ENCODE measurements at regions of chr11 and their contacts with region 1.

Region 1: GRCh38 chr11:1521382-1522080 is 35.0 kb upstream of the MOB2 start:
- DNase-seq: no peak
- H3K4me3 ChIP-seq: no peak overlapping the region
- H3K27ac ChIP-seq: no peak overlapping the region
- H3K4me1 ChIP-seq: peaks cover 10% of the 10 kb centered on the region
- H3K27me3 ChIP-seq: no peaks in the 10 kb centered on the region
- CTCF ChIP-seq: no peak
- EP300 ChIP-seq: no peak
- POLR2A ChIP-seq: no peak

Region 2: GRCh38 chr11:1202776-1203504 is 318.6 kb before region 1 on chr11:
- intact Hi-C with region 1: loop called (anchors 2 to 5 kb)
- DNase-seq: peak in 4 of 5 donors; percentile 53 to 75 (median 68)
- H3K4me3 ChIP-seq: no peak overlapping the region
- H3K27ac ChIP-seq: no peak overlapping the region
- H3K4me1 ChIP-seq: no peaks in the 10 kb centered on the region
- H3K27me3 ChIP-seq: no peaks in the 10 kb centered on the region
- CTCF ChIP-seq: peak; percentile 74 to 86 (median 78)
- EP300 ChIP-seq: no peak
- POLR2A ChIP-seq: no peak